Left ventricle myocardium inferior (tissue), 1 donor: ENCODE measurements at regions of chr17 and their contacts with region 1.

Region 1: GRCh38 chr17:32006957-32007462 is at the start of gene LRRC37B:
- DNase-seq: peak; percentile 90
- H3K4me3 ChIP-seq: peak within 1 kb of the TSS; percentile 91
- H3K27ac ChIP-seq: peak within 1 kb of the TSS; percentile 83
- H3K4me1 ChIP-seq: peaks cover 40% of the 10 kb centered on the region
- H3K27me3 ChIP-seq: no peaks in the 10 kb centered on the region
- CTCF ChIP-seq: peak; percentile 97
- total RNA-seq, gene LRRC37B: 3.2 TPM

Region 2: DNA sequence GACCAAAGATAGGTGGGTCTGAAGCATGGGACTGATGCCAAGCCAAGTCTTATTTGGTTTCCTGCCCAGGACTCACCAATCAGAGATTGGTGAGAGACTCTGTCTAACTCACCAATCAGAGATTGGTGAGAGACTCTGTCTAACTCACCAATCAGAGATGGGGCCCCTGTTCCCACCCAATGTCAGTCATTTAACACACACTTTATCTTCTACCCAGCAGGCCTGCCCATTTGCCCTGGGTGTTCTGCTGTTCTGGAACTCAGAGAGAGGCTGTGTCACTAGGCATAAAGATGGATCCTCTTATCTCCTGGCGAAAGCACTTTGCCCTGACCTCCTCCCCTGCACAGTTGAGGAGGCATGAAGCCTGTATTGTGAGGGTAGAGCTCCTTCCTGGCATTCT is 129.8 kb after region 1 on chr17:
- intact Hi-C with region 1: loop called (anchors 10 kb)
- DNase-seq: no peak
- H3K4me3 ChIP-seq: no peak overlapping the region
- H3K27ac ChIP-seq: no peak overlapping the region
- H3K4me1 ChIP-seq: peaks cover 23% of the 10 kb centered on the region
- H3K27me3 ChIP-seq: no peaks in the 10 kb centered on the region
- CTCF ChIP-seq: no peak